Body of pancreas (tissue), 4 donors: ENCODE measurements at regions of chr17 and their contacts with region 1.

Region 1: GRCh38 chr17:56085588-56086267 is 67.5 kb upstream of the ANKFN1 start:
- DNase-seq: no peak
- ATAC-seq: no peak
- H3K4me3 ChIP-seq: no peak overlapping the region
- H3K27ac ChIP-seq: no peak overlapping the region
- H3K4me1 ChIP-seq: no peaks in the 10 kb centered on the region
- H3K27me3 ChIP-seq: no peaks in the 10 kb centered on the region
- CTCF ChIP-seq: no peak
- POLR2A ChIP-seq: no peak

Region 2: GRCh38 chr17:56034201-56034635 is 51.5 kb before region 1 on chr17:
- intact Hi-C with region 1: loop called (anchors 10 kb)
- DNase-seq: peak in 1 of 4 donors; percentile 3
- ATAC-seq: no peak
- H3K4me3 ChIP-seq: no peak overlapping the region
- H3K27ac ChIP-seq: no peak overlapping the region
- H3K4me1 ChIP-seq: no peaks in the 10 kb centered on the region
- H3K27me3 ChIP-seq: no peaks in the 10 kb centered on the region
- CTCF ChIP-seq: no peak
- POLR2A ChIP-seq: no peak